Gastrocnemius medialis (tissue), 4 donors: ENCODE measurements at regions of chr17 and their contacts with region 1.

Region 1: DNA sequence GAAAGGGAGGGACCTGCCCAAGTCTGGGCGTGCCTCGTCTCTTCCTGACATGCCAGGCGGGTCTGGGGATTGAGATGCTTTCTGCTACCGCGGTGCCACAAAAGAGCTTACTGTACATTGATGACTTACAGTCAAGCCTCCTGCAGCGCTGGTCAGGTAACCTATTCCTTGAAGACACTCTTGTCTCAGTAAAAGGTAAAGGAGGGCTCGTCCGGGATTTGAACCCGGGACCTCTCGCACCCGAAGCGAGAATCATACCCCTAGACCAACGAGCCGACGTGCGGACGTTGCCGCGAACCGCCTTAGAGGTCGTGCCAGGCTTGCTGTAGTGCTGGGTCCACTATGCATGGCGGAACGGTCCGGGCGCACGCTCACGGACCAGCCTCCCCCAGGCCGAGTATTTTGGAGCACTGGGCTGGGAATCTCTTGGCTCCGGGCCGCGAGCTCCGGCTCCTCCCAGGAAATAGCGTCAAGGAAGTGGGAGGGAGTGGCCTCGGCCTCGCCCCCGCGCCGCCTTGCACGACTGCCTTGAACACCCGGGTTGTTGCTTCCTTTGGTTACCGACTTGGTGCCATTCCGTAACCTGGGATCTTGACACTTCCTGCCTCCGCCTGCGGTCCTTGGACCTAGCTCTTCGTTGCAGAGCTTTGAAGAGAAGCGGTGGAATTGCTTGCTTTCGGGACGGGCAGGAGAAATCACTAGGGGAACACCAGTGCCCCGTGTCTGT is 12.4 kb upstream of the AURKB start:
- DNase-seq: peak; percentile 88 to 95
- ATAC-seq: peak; percentile 51 to 55
- H3K4me3 ChIP-seq: peak overlapping the region; percentile 64 to 91 (median 67)
- H3K27ac ChIP-seq: peak overlapping the region; percentile 89 to 99 (median 94)
- H3K4me1 ChIP-seq: peaks cover 11 to 13% of the 10 kb centered on the region in 2 donors
- H3K27me3 ChIP-seq: no peaks in the 10 kb centered on the region
- CTCF ChIP-seq: no peak
- POLR2A ChIP-seq: peak; percentile 63 to 65

Region 2: GRCh38 chr17:8189711-8190477 is 32.9 kb before region 1 on chr17 and contains the start of gene BORCS6:
- in situ Hi-C with region 1: loop called in 1 of 4 experiments (anchors 5 kb)
- intact Hi-C with region 1: loop called (anchors 1 kb)
- DNase-seq: peak; percentile 99
- ATAC-seq: peak; percentile 68 to 69
- H3K4me3 ChIP-seq: peak within 1 kb of the TSS; percentile 59 to 98 (median 84)
- H3K27ac ChIP-seq: peak within 1 kb of the TSS; percentile 86 to 99 (median 97)
- H3K4me1 ChIP-seq: peaks cover 37 to 42% of the 10 kb centered on the region in 2 donors
- H3K27me3 ChIP-seq: no peaks in the 10 kb centered on the region
- CTCF ChIP-seq: peak in 1 of 5 experiments; percentile 19
- POLR2A ChIP-seq: peak; percentile 83 to 91
- total RNA-seq, gene BORCS6: 16.2 to 34.5 (median 26.2) TPM

Region 3: GRCh38 chr17:8288336-8289102 is 65.7 kb after region 1 on chr17 and contains the start of gene RANGRF:
- in situ Hi-C with region 1: loop called in 1 of 4 experiments (anchors 10 kb)
- intact Hi-C with region 1: loop called (anchors 2 kb)
- DNase-seq: peak; percentile 81 to 87
- ATAC-seq: peak; percentile 94 to 96
- H3K4me3 ChIP-seq: peak within 1 kb of the TSS; percentile 74 to 100 (median 96)
- H3K27ac ChIP-seq: peak within 1 kb of the TSS; percentile 89 to 100 (median 100)
- H3K4me1 ChIP-seq: peaks cover 16 to 24% of the 10 kb centered on the region in 2 donors
- H3K27me3 ChIP-seq: no peaks in the 10 kb centered on the region
- CTCF ChIP-seq: no peak
- POLR2A ChIP-seq: peak; percentile 59 to 68
- total RNA-seq, gene RANGRF: 6.9 to 21.2 (median 15.4) TPM

Region 4: DNA sequence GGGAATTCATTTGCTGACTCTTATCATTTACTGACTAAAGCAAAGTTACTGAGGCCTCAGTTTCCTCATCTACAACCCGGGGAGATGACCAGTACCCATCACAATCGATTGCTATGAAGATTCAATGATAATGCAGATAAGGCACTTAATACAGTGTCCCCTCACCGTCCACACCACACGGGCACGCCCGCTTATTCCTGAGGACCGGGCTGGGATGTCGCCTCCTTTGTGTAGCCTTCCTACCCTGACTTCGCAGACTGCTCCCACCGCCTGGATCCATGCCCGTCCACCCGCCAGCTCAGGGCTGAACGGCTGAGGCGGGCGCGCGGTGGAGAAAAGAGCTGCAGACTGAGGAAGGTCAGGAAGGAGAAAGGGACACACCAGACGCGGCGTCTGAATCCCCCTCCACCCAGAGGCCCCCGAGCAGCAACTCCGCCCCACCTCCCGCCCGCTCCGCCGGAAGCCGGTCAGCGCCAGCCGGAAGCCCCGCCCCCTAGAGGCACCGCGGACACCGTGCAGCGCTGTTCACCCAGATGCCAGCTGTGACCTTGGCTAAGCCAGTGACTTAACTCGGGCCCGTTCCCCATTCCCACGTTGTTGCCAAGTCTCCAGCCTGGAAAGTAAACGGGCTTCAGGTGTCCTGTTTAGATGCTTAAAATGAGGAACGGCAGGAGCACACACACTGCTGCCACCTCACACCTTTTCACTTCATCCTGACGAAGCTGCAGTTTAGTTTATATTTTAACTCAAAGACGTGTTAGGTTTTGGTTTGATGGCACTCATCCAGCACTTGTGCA is 153.7 kb after region 1 on chr17 and contains the start of gene KRABD2:
- in situ Hi-C with region 1: no loop called
- intact Hi-C with region 1: loop called (anchors 1 kb)
- DNase-seq: peak; percentile 84 to 92
- ATAC-seq: peak; percentile 92 to 95
- H3K4me3 ChIP-seq: peak within 1 kb of the TSS; percentile 72 to 95 (median 84)
- H3K27ac ChIP-seq: peak within 1 kb of the TSS; percentile 90 to 93 (median 92)
- H3K4me1 ChIP-seq: peaks cover 35 to 46% of the 10 kb centered on the region in 2 donors
- H3K27me3 ChIP-seq: no peaks in the 10 kb centered on the region
- CTCF ChIP-seq: peak; percentile 18 to 80 (median 70)
- POLR2A ChIP-seq: peak; percentile 74

Region 5: DNA sequence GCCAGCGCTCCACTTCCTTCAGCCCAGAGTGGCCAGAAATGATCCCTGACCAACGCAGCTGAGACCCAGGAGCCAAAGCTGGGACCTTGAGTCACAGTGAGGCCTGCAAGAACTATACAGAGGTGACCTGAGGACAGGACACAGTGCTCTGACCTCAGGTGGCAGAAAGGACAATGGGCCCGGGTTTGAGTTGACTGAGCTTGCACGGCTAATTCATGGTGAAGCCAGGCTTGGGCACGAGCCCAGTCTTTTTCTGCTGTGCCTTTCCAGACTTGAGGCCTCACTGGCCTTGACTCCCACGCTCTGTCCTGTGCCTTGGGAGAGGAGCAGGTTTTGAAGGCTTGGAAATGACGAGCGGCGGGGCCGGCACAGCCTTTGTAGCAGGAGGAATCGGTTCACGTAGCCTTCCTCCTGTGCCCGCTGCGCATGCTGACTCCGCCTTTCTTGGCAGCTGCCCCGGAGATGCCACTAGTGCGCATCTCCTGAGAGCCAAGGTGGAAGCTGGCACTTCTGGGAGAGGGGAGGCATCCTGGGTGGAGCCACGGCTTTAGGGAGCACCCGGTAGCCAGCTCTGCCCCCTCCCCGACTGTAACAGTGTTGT is 247.8 kb after region 1 on chr17:
- in situ Hi-C with region 1: no loop called
- intact Hi-C with region 1: no loop called
- DNase-seq: peak in 1 of 2 donors; percentile 57
- ATAC-seq: peak; percentile 22 to 55
- H3K4me3 ChIP-seq: peak overlapping the region in 1 of 4 donors; percentile 7
- H3K27ac ChIP-seq: peak overlapping the region; percentile 0 to 59 (median 31)
- H3K4me1 ChIP-seq: peaks cover 21 to 30% of the 10 kb centered on the region in 2 donors
- H3K27me3 ChIP-seq: no peaks in the 10 kb centered on the region
- CTCF ChIP-seq: no peak
- POLR2A ChIP-seq: no peak

Region 6: DNA sequence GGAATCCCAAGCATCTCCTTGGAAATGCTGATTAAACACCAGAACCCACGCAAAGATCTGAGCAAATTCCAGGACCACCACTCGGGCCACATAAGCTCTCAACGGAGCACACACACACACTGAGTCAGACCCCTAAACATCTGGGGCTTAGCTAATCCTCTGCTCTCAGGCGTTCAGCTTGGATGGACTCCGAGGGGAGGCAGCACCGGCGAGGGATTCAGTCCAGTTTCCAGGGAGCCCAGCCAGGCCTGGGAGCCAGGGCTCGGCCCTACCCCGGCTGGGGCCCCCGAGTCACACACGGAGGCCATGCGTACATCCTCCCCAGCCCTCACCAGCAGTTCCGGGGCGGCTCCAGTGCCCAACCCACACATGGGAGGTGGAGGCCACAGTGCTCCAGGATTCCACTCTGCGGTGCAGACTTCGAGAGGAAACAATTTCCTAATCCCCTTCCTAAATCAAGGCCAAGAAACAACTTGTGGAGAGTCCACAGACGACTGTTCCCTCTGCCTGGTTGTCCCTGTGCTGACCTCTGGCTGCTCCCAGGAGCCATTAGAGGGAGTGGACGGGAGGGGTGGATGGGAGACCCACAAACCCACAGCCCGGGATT is 1905.1 kb after region 1 on chr17:
- in situ Hi-C with region 1: no loop called
- intact Hi-C with region 1: no loop called
- DNase-seq: peak; percentile 73 to 77
- ATAC-seq: peak; percentile 65 to 69
- H3K4me3 ChIP-seq: no peak overlapping the region
- H3K27ac ChIP-seq: peak overlapping the region; percentile 54 to 68 (median 65)
- H3K4me1 ChIP-seq: peaks cover 0 to 2% of the 10 kb centered on the region in 2 donors
- H3K27me3 ChIP-seq: no peaks in the 10 kb centered on the region
- CTCF ChIP-seq: no peak
- POLR2A ChIP-seq: no peak